MCF 10A (cell line): ENCODE measurements at regions of chr4 and their contacts with region 1.

Region 1: DNA sequence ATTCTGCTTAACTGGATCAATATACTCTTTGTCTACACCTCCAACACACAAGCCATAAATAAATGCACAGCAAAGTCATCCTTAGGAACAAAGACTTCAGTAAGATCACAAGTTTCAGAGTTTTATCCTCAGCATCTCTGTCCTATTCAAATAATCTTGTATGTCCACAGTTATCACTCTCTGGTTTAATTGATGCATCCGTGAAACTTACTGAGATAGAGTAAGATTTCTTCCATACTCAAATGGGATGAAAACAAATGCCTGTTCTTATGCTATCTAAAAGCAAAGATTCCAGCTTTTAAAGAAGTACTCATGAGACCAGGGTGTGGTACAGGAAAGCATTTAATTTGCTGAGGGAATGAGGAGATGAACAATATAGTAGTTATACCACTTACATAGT is 184.6 kb upstream of the SLC7A11 start:
- DNase-seq: no peak
- H3K4me3 Mint-ChIP-seq: no peak overlapping the region
- H3K27ac Mint-ChIP-seq: no peak overlapping the region
- H3K4me1 Mint-ChIP-seq: no peaks in the 10 kb centered on the region
- H3K27me3 Mint-ChIP-seq: no peaks in the 10 kb centered on the region
- CTCF ChIP-seq: no peak

Region 2: GRCh38 chr4:138138774-138139173 is 288.0 kb before region 1 on chr4:
- CTCF ChIA-PET with region 1: no interaction called
- POLR2A ChIA-PET with region 1: no interaction called
- intact Hi-C with region 1: no loop called
- DNase-seq: no peak
- H3K4me3 Mint-ChIP-seq: no peak overlapping the region
- H3K27ac Mint-ChIP-seq: no peak overlapping the region
- H3K4me1 Mint-ChIP-seq: no peaks in the 10 kb centered on the region
- H3K27me3 Mint-ChIP-seq: no peaks in the 10 kb centered on the region
- CTCF ChIP-seq: no peak

Region 3: GRCh38 chr4:138392751-138393308 is 34.0 kb before region 1 on chr4:
- CTCF ChIA-PET with region 1: no interaction called
- POLR2A ChIA-PET with region 1: no interaction called
- intact Hi-C with region 1: loop called (anchors 1 kb)
- DNase-seq: no peak
- H3K4me3 Mint-ChIP-seq: no peak overlapping the region
- H3K27ac Mint-ChIP-seq: no peak overlapping the region
- H3K4me1 Mint-ChIP-seq: no peaks in the 10 kb centered on the region
- H3K27me3 Mint-ChIP-seq: no peaks in the 10 kb centered on the region
- CTCF ChIP-seq: no peak